ENCODE measurements at regions of chr22 and their contacts with region 1.

Region 1: GRCh38 chr22:42939941-42940653 is 74.9 kb downstream of the PACSIN2 start:
- DNase-seq: peak in 1 of 2 donors; percentile 75
- H3K4me3 ChIP-seq: peak overlapping the region in 1 of 2 donors; percentile 26
- H3K27ac ChIP-seq: peak overlapping the region; percentile 97 to 98
- H3K4me1 ChIP-seq: peaks cover 64 to 93% of the 10 kb centered on the region in 2 donors
- H3K27me3 ChIP-seq: no peaks in the 10 kb centered on the region
- CTCF ChIP-seq: no peak

Region 2: GRCh38 chr22:42856865-42857704 is 83.0 kb before region 1 on chr22 and contains the start of gene ARFGAP3:
- intact Hi-C with region 1: loop called (anchors 5 kb)
- DNase-seq: peak; percentile 65 to 96
- H3K4me3 ChIP-seq: peak within 1 kb of the TSS; percentile 68 to 96
- H3K27ac ChIP-seq: peak within 1 kb of the TSS; percentile 94 to 99
- H3K4me1 ChIP-seq: peaks cover 8 to 21% of the 10 kb centered on the region in 2 donors
- H3K27me3 ChIP-seq: no peaks in the 10 kb centered on the region
- CTCF ChIP-seq: peak in 1 of 3 experiments; percentile 6
- total RNA-seq, gene ARFGAP3: 21.6 TPM

Region 3: DNA sequence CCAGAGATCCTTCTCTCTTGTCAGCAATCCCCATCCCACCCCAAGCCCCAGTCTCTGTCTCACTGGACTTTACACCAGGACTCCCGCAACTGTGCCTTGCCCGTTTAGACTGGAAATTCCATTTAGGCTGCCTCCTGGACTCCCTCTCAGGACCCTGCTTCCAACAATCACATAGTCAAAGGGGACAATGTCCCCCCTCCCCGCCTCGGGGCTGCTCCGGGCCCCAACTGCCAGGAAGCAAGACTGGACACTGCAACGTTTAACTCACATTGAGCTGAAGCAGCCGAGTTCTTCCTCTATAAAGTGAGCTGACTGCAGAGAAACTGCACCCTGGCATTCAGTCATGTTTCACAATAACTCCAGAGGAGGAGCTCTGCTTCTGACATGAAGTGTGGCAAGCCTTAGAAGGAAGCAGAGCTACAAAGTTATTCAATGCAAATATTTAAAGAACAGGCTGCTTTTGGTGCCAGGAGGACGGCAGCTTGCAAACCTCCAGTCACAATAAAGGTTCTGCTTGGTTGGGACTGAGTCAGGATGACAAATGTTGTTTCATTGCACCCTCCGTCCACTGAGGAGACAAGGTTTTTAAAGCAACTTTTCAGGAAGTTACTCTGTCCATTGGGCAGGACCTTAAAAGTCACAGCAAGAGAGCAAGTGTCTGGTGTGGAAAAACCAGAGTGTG is 54.9 kb after region 1 on chr22:
- intact Hi-C with region 1: loop called (anchors 2 kb)
- DNase-seq: peak in 1 of 2 donors; percentile 92
- H3K4me3 ChIP-seq: peak overlapping the region; percentile 51 to 64
- H3K27ac ChIP-seq: peak overlapping the region; percentile 93
- H3K4me1 ChIP-seq: peaks cover 38 to 86% of the 10 kb centered on the region in 2 donors
- H3K27me3 ChIP-seq: no peaks in the 10 kb centered on the region
- CTCF ChIP-seq: no peak